H1 (cell line): ENCODE measurements at regions of chr17 and their contacts with region 1.

Region 1: GRCh38 chr17:50565402-50566350 is 5.2 kb downstream of the CACNA1G start:
- DNase-seq: no peak
- H3K4me3 ChIP-seq: peak overlapping the region in 1 of 4 experiments; percentile 44; a peak in 1 of 8 replicates
- H3K27ac ChIP-seq: no peak overlapping the region
- H3K4me1 ChIP-seq: peaks cover 0 to 32% (median 21%) of the 10 kb centered on the region in 4 experiments; a peak in 6 of 7 replicates
- H3K27me3 ChIP-seq: peaks cover 27 to 58% (median 54%) of the 10 kb centered on the region in 4 experiments
- CTCF ChIP-seq: no peak
- EP300 ChIP-seq: no peak
- POLR2A ChIP-seq: no peak
- RAD21 ChIP-seq: no peak

Region 2: DNA sequence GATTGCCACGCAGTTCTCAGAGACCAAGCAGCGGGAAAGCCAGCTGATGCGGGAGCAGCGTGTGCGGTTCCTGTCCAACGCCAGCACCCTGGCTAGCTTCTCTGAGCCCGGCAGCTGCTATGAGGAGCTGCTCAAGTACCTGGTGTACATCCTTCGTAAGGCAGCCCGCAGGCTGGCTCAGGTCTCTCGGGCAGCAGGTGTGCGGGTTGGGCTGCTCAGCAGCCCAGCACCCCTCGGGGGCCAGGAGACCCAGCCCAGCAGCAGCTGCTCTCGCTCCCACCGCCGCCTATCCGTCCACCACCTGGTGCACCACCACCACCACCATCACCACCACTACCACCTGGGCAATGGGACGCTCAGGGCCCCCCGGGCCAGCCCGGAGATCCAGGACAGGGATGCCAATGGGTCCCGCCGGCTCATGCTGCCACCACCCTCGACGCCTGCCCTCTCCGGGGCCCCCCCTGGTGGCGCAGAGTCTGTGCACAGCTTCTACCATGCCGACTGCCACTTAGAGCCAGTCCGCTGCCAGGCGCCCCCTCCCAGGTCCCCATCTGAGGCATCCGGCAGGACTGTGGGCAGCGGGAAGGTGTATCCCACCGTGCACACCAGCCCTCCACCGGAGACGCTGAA is 10.0 kb after region 1 on chr17:
- CTCF ChIA-PET with region 1: interaction called, 11 read pairs
- POLR2A ChIA-PET with region 1: interaction called, 6 read pairs
- DNase-seq: peak in 1 of 2 experiments; percentile 73
- H3K4me3 ChIP-seq: no peak overlapping the region
- H3K27ac ChIP-seq: no peak overlapping the region
- H3K4me1 ChIP-seq: peaks cover 0 to 8% (median 5%) of the 10 kb centered on the region in 4 experiments; a peak in 4 of 7 replicates
- H3K27me3 ChIP-seq: no peaks in the 10 kb centered on the region
- CTCF ChIP-seq: peak; percentile 29 to 36 (median 36); a peak in 3 of 4 replicates
- EP300 ChIP-seq: no peak
- POLR2A ChIP-seq: no peak
- RAD21 ChIP-seq: peak in 1 of 2 experiments; percentile 31; a peak in 3 of 4 replicates

Region 3: GRCh38 chr17:50583641-50584040 is 18.0 kb after region 1 on chr17:
- CTCF ChIA-PET with region 1: interaction called, 10 read pairs
- POLR2A ChIA-PET with region 1: interaction called, 5 read pairs
- DNase-seq: no peak
- H3K4me3 ChIP-seq: no peak overlapping the region
- H3K27ac ChIP-seq: no peak overlapping the region
- H3K4me1 ChIP-seq: peaks cover 0 to 22% (median 9%) of the 10 kb centered on the region in 4 experiments; a peak in 6 of 7 replicates
- H3K27me3 ChIP-seq: no peaks in the 10 kb centered on the region; a peak in 1 of 7 replicates
- CTCF ChIP-seq: no peak
- EP300 ChIP-seq: no peak
- POLR2A ChIP-seq: no peak
- RAD21 ChIP-seq: no peak

Region 4: GRCh38 chr17:50725769-50726655 is 160.3 kb after region 1 on chr17:
- CTCF ChIA-PET with region 1: no interaction called
- POLR2A ChIA-PET with region 1: no interaction called
- DNase-seq: no peak
- H3K4me3 ChIP-seq: no peak overlapping the region
- H3K27ac ChIP-seq: no peak overlapping the region
- H3K4me1 ChIP-seq: peaks cover 2 to 7% (median 4%) of the 10 kb centered on the region in 4 experiments; a peak in 4 of 7 replicates
- H3K27me3 ChIP-seq: no peaks in the 10 kb centered on the region
- CTCF ChIP-seq: no peak
- EP300 ChIP-seq: no peak
- POLR2A ChIP-seq: no peak
- RAD21 ChIP-seq: no peak